A673 (cell line): ENCODE measurements at regions of chr14 and their contacts with region 1.

Region 1: DNA sequence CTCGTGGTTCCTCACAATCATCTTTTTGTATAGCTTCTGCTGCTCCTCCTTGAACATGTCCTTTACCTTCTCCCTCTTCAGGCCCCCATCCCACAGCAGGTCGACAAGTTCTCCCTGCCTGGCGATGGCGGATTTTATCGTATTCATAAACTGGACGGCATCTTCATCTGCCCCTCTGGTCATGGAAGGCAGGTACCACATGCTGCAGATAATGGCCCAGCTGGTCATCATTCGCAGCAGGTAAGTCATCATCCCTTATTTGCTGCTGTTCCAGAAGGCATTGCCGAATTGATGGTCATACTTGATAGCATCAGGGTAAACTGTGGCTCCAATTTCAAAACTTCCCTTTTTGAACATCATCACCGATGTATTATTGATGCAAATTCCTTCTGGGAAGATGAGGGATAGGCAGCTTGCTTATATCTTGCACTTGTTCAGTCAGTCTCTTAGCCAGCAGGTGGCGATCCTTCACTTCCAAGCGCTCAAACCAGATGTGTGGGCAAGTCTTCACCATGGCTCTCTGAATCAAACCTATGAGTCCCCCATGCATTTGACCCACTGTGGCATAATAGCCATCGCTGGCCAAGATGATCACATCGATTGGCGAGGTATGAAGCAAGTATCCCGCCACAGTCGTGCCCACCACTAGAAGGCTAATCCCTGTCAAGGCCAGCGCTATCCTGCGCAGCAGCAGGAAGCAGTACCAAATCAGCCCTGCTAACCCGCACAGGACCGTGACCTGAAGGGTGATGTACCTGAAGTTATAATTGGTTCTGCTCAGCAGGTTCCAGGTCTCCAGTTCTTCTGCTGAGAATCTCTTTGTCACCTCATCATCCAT is 381.5 kb upstream of the STXBP6 start:
- DNase-seq: peak; percentile 73
- H3K4me3 ChIP-seq: no peak overlapping the region
- H3K27ac ChIP-seq: no peak overlapping the region
- H3K4me1 ChIP-seq: no peaks in the 10 kb centered on the region
- H3K27me3 ChIP-seq: no peaks in the 10 kb centered on the region
- CTCF ChIP-seq: peak; percentile 67

Region 2: GRCh38 chr14:25537846-25538455 is 106.5 kb after region 1 on chr14:
- CTCF ChIA-PET with region 1: interaction called, 25 read pairs
- POLR2A ChIA-PET with region 1: interaction called, 3 read pairs
- intact Hi-C with region 1: loop called (anchors 2 kb)
- DNase-seq: peak; percentile 75
- H3K4me3 ChIP-seq: no peak overlapping the region
- H3K27ac ChIP-seq: no peak overlapping the region
- H3K4me1 ChIP-seq: no peaks in the 10 kb centered on the region
- H3K27me3 ChIP-seq: no peaks in the 10 kb centered on the region
- CTCF ChIP-seq: peak; percentile 88